ENCODE measurements at regions of chr6 and their contacts with region 1.

Region 1: GRCh38 chr6:30571075-30571768 is at the start of gene ABCF1:
- DNase-seq: peak; percentile 98 to 100 (median 99)
- H3K4me3 ChIP-seq: peak within 1 kb of the TSS; percentile 88 to 94
- H3K4me3 Mint-ChIP-seq: peak within 1 kb of the TSS; percentile 97 to 100 (median 100)
- H3K27ac ChIP-seq: peak within 1 kb of the TSS; percentile 95
- H3K27ac Mint-ChIP-seq: peak within 1 kb of the TSS; percentile 97 to 100 (median 99)
- H3K4me1 ChIP-seq: peaks cover 45% of the 10 kb centered on the region
- H3K4me1 Mint-ChIP-seq: peaks cover 48 to 65% (median 54%) of the 10 kb centered on the region in 4 donors
- H3K27me3 ChIP-seq: no peaks in the 10 kb centered on the region
- H3K27me3 Mint-ChIP-seq: no peaks in the 10 kb centered on the region
- total RNA-seq, gene ABCF1: 60.8 to 66.8 TPM

Region 2: DNA sequence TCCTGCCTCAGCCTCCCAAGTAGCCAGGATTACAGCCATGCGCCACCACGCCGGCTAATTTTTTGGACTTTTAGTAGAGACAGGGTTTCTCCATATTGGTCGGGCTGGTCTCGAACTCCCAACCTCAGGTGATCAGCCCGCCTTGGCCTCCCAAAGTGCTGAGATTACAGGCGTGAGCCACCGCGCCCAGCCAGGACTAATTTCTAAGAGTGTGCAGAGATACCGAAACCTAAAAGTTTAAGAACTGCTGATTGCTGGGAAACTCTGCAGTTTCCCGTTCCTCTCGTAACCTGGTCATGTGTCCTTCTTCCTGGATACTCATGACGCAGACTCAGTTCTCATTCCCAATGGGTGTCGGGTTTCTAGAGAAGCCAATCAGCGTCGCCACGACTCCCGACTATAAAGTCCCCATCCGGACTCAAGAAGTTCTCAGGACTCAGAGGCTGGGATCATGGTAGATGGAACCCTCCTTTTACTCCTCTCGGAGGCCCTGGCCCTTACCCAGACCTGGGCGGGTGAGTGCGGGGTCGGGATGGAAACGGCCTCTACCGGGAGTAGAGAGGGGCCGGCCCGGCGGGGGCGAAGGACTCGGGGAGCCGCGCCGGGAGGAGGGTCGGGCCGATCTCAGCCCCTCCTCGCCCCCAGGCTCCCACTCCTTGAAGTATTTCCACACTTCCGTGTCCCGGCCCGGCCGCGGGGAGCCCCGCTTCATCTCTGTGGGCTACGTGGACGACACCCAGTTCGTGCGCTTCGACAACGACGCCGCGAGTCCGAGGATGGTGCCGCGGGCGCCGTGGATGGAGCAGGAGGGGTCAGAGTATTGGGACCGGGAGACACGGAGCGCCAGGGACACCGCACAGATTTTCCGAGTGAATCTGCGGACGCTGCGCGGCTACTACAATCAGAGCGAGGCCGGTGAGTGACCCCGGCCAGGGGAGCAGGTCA is 81.9 kb before region 1 on chr6 and contains the start of gene HLA-E:
- CTCF ChIA-PET with region 1: interaction called, 3 read pairs
- POLR2A ChIA-PET with region 1: interaction called, 23 read pairs
- intact Hi-C with region 1: no loop called
- DNase-seq: peak; percentile 92 to 98 (median 96)
- H3K4me3 ChIP-seq: peak within 1 kb of the TSS; percentile 98 to 99
- H3K4me3 Mint-ChIP-seq: peak within 1 kb of the TSS; percentile 98 to 99 (median 99)
- H3K27ac ChIP-seq: peak within 1 kb of the TSS; percentile 95
- H3K27ac Mint-ChIP-seq: peak within 1 kb of the TSS; percentile 97 to 99 (median 99)
- H3K4me1 ChIP-seq: peaks cover 30% of the 10 kb centered on the region
- H3K4me1 Mint-ChIP-seq: peaks cover 28 to 60% (median 44%) of the 10 kb centered on the region in 4 donors
- H3K27me3 ChIP-seq: no peaks in the 10 kb centered on the region
- H3K27me3 Mint-ChIP-seq: no peaks in the 10 kb centered on the region
- total RNA-seq, gene HLA-E: 1,097 to 1,122 TPM

Region 3: DNA sequence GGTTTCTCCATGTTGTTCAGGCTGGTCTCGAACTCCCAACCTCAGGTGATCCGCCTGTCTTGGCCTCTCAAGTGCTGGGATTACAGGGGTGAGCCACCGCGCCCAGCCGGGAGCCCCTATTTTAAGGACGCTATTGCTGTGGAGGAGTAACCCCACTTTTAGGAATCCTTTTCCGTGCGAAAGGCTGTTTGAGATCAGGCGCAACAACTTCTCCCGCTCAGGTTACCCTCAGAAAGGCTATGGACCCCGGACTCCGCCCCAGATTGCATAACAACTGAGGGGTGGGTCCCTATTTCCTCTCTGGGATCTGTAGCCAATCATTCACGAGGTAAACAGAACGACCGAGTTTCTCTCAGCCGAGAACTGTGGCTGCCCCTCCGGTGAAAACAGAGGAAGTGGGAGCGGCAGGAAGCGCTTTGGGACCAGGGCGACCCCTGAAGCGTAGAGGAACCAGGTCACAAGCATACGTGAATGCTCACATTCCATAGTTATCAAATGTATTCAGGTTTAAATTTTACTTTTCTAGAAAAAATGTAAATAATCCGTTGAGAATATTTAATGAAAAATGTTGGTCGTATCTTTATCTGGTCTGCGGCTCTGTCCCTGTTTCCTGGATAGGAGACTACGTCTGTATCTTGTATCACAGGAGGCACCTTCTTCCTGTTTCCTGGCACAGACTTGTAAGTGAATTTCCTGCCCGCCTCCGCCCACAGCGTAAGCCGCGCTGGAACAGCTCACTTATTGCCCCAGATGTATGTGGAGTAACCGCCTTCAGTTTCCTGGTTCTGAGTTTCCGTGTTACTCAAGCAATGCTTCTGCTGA is 55.1 kb before region 1 on chr6:
- CTCF ChIA-PET with region 1: no interaction called
- POLR2A ChIA-PET with region 1: interaction called, 3 read pairs
- intact Hi-C with region 1: loop called (anchors 1 kb)
- DNase-seq: peak; percentile 91 to 98 (median 96)
- H3K4me3 ChIP-seq: peak overlapping the region; percentile 42 to 64
- H3K4me3 Mint-ChIP-seq: peak overlapping the region; percentile 85 to 92 (median 88)
- H3K27ac ChIP-seq: peak overlapping the region; percentile 91
- H3K27ac Mint-ChIP-seq: peak overlapping the region; percentile 95 to 99 (median 99)
- H3K4me1 ChIP-seq: peaks cover 66% of the 10 kb centered on the region
- H3K4me1 Mint-ChIP-seq: peaks cover 28 to 78% (median 49%) of the 10 kb centered on the region in 4 donors
- H3K27me3 ChIP-seq: no peaks in the 10 kb centered on the region
- H3K27me3 Mint-ChIP-seq: no peaks in the 10 kb centered on the region

Region 4: GRCh38 chr6:30590994-30591393 is 19.8 kb after region 1 on chr6:
- CTCF ChIA-PET with region 1: interaction called, 11 read pairs
- POLR2A ChIA-PET with region 1: interaction called, 3 read pairs
- intact Hi-C with region 1: no loop called
- DNase-seq: no peak
- H3K4me3 ChIP-seq: no peak overlapping the region
- H3K4me3 Mint-ChIP-seq: no peak overlapping the region
- H3K27ac ChIP-seq: no peak overlapping the region
- H3K27ac Mint-ChIP-seq: peak overlapping the region in 3 of 7 donors; percentile 30 to 86 (median 48)
- H3K4me1 ChIP-seq: no peaks in the 10 kb centered on the region
- H3K4me1 Mint-ChIP-seq: peaks cover 0 to 7% (median 4%) of the 10 kb centered on the region in 4 donors
- H3K27me3 ChIP-seq: no peaks in the 10 kb centered on the region
- H3K27me3 Mint-ChIP-seq: no peaks in the 10 kb centered on the region

Region 5: DNA sequence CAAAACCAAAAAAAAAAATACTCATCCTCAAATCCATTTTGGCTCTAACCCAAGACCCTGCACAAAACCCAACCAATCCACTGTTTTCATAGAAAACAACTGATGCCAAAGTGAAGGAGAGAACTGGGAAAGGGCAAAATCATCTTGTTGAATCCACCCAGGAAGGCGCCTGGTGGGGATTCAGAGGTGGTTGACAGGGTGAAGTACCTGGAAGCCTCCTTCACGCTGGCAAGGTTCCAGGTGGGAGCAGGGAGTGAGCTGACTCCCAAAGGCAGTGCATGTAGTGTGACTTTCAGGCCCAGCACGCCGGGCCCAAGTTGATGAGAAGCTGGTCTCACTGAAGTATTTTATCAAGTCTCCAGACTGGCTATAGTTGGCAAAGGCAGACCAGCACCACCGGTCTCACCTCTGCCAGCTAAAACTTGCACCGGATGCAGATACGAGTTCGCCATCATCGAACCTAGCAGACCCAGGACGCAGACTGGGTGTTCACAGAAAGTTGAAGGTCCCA is 29.3 kb after region 1 on chr6:
- CTCF ChIA-PET with region 1: interaction called, 11 read pairs
- POLR2A ChIA-PET with region 1: interaction called, 19 read pairs
- intact Hi-C with region 1: no loop called
- DNase-seq: no peak
- H3K4me3 ChIP-seq: no peak overlapping the region
- H3K4me3 Mint-ChIP-seq: no peak overlapping the region
- H3K27ac ChIP-seq: no peak overlapping the region
- H3K27ac Mint-ChIP-seq: peak overlapping the region in 2 of 7 donors; percentile 41 to 64
- H3K4me1 ChIP-seq: no peaks in the 10 kb centered on the region
- H3K4me1 Mint-ChIP-seq: peaks cover 7 to 26% (median 17%) of the 10 kb centered on the region in 4 donors
- H3K27me3 ChIP-seq: no peaks in the 10 kb centered on the region
- H3K27me3 Mint-ChIP-seq: no peaks in the 10 kb centered on the region